ENCODE measurements at regions of chr13 and their contacts with region 1.

Region 1: GRCh38 chr13:30465585-30466357 is at the start of gene HMGB1:
- DNase-seq: peak; percentile 99
- ATAC-seq: peak; percentile 96
- total RNA-seq, gene HMGB1: 163 TPM

Region 2: GRCh38 chr13:30408319-30409101 is 57.3 kb before region 1 on chr13:
- intact Hi-C with region 1: loop called (anchors 5 kb)
- DNase-seq: peak; percentile 97
- ATAC-seq: peak; percentile 95

Region 3: GRCh38 chr13:30422054-30422839 is 43.5 kb before region 1 on chr13 and contains the start of gene UBE2L5:
- intact Hi-C with region 1: loop called (anchors 5 kb)
- DNase-seq: peak; percentile 88
- ATAC-seq: peak; percentile 94
- total RNA-seq, gene UBE2L5: not detected

Region 4: DNA sequence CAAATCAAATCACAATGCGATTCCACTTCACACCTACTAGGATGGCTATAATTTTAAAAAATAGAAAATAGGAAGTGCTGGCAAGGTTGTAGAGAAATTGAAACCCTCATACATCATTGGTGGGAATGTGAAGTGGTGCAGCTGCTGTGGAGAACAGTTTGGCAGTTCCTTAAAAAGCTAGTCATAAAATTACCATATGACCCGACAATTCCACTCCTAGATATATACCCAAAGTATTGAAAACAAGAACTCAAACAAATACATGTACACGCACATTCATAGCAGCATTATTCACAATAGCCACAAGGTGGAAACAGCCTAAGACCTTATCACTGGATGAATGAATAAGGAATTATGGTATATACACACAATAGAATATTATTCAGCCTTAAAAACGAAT is 12.0 kb before region 1 on chr13:
- intact Hi-C with region 1: no loop called
- DNase-seq: no peak
- ATAC-seq: no peak

Region 5: GRCh38 chr13:30617315-30618185 is 151.8 kb after region 1 on chr13 and contains the start of gene USPL1:
- intact Hi-C with region 1: loop called (anchors 2 kb)
- DNase-seq: peak; percentile 99
- ATAC-seq: peak; percentile 96
- total RNA-seq, gene USPL1: 8.8 TPM

Region 6: DNA sequence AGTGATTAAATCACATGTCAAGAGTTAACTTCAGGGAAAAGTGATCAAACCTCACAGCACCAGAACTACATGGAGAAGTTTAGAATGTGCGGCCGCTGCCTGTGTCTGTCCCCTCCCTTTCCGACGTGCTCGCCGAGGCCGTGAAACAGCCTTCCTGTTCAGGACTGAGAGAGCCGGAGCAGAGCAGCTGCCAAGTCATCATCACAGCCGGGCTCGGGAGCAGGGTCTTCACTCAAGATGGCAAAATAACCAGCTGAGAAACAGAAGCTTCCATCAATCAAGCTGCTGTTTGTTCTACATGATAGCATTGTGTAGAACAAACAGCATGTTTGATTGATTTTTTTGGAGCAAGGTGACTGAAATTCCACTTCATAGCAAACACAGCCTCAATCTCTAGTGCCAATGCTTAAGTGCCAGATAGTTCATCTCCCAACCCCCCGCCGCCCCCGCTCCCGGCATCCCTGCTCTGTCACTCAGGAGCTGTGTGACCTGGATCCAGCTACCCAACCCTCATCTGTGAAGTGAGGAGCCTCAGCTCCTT is 625.3 kb after region 1 on chr13:
- intact Hi-C with region 1: no loop called
- DNase-seq: no peak
- ATAC-seq: no peak

Measured in Right ventricle myocardium superior (tissue), 1 donor.